CD14-positive monocyte (primary cell): ENCODE measurements at regions of chr15 and their contacts with region 1.

Region 1: DNA sequence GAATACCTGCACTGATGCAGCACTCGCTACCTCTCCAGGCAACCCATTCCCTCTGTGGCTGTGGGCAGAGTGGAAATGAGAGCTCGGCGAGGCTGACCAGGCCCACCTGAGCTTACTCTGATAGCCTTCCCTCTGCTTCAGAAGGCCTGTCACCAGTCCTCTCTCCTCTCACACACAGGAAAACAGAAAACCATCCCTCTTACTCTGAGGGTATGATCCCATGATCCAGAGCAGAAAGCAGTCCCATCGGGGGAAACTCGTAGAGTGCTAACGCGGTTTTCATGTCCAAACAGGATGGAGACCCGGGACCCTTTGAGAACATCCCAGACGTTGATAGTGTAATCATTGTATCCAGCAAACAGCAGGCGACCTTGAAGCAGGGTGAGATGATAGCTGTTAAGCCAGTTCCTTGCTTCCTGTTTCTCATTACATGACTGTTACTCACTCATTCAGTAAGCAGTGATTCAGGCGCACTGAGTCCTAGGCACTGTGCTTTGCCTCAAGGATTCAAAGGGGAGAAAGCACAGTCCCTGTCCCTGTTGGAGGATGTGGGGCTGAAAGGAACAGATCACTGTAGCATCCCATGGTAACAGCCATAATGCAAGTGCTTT is 11.8 kb upstream of the BCL2L10 start:
- DNase-seq: peak in 2 of 3 donors; percentile 38 to 46
- H3K4me3 ChIP-seq: no peak overlapping the region
- H3K4me3 Mint-ChIP-seq: no peak overlapping the region
- H3K27ac ChIP-seq: no peak overlapping the region
- H3K27ac Mint-ChIP-seq: peak overlapping the region in 1 of 7 donors; percentile 0
- H3K4me1 ChIP-seq: peaks cover 0 to 5% of the 10 kb centered on the region in 2 donors
- H3K4me1 Mint-ChIP-seq: peaks cover 7% of the 10 kb centered on the region
- H3K27me3 ChIP-seq: no peaks in the 10 kb centered on the region
- H3K27me3 Mint-ChIP-seq: no peaks in the 10 kb centered on the region
- CTCF ChIP-seq: no peak

Region 2: GRCh38 chr15:52085289-52085688 is 39.1 kb before region 1 on chr15:
- intact Hi-C with region 1: loop called in 1 of 2 experiments (anchors 5 kb)
- DNase-seq: no peak
- H3K4me3 ChIP-seq: no peak overlapping the region
- H3K4me3 Mint-ChIP-seq: no peak overlapping the region
- H3K27ac ChIP-seq: no peak overlapping the region
- H3K27ac Mint-ChIP-seq: no peak overlapping the region
- H3K4me1 ChIP-seq: peaks cover 16 to 24% of the 10 kb centered on the region in 2 donors
- H3K4me1 Mint-ChIP-seq: peaks cover 25% of the 10 kb centered on the region
- H3K27me3 ChIP-seq: no peaks in the 10 kb centered on the region
- H3K27me3 Mint-ChIP-seq: peaks cover 0 to 5% (median 0%) of the 10 kb centered on the region in 3 donors
- CTCF ChIP-seq: no peak